ENCODE measurements at regions of chr19 and their contacts with region 1.

Region 1: GRCh38 chr19:54882758-54883157 is 8.7 kb downstream of the FCAR start:
- DNase-seq: no peak
- ATAC-seq: peak; percentile 40
- H3K4me3 ChIP-seq: no peak overlapping the region
- H3K4me3 Mint-ChIP-seq: peak overlapping the region in 2 of 10 donors; percentile 36 to 68
- H3K27ac ChIP-seq: no peak overlapping the region
- H3K27ac Mint-ChIP-seq: peak overlapping the region in 2 of 9 donors; percentile 51 to 82
- H3K4me1 ChIP-seq: no peaks in the 10 kb centered on the region
- H3K4me1 Mint-ChIP-seq: peaks cover 0 to 11% (median 0%) of the 10 kb centered on the region in 7 donors
- H3K27me3 ChIP-seq: no peaks in the 10 kb centered on the region
- H3K27me3 Mint-ChIP-seq: peaks cover 12 to 51% (median 35%) of the 10 kb centered on the region in 5 donors

Region 2: GRCh38 chr19:55062734-55063492 is 180.2 kb after region 1 on chr19 and contains the start of gene RDH13:
- CTCF ChIA-PET with region 1: no interaction called
- POLR2A ChIA-PET with region 1: no interaction called
- intact Hi-C with region 1: loop called in 1 of 2 experiments (anchors 5 kb)
- DNase-seq: peak; percentile 95 to 99 (median 97)
- ATAC-seq: peak; percentile 100
- H3K4me3 ChIP-seq: peak within 1 kb of the TSS; percentile 74
- H3K4me3 Mint-ChIP-seq: peak within 1 kb of the TSS; percentile 65 to 94 (median 86)
- H3K27ac ChIP-seq: peak within 1 kb of the TSS; percentile 78
- H3K27ac Mint-ChIP-seq: peak within 1 kb of the TSS; percentile 31 to 88 (median 77)
- H3K4me1 ChIP-seq: peaks cover 7 to 10% of the 10 kb centered on the region in 2 donors
- H3K4me1 Mint-ChIP-seq: peaks cover 0 to 33% (median 18%) of the 10 kb centered on the region in 7 donors
- H3K27me3 ChIP-seq: peaks cover 0 to 9% of the 10 kb centered on the region in 2 donors
- H3K27me3 Mint-ChIP-seq: peaks cover 19 to 36% (median 22%) of the 10 kb centered on the region in 5 donors
- total RNA-seq, gene RDH13: 14.5 to 24.8 (median 19.0) TPM

Region 3: GRCh38 chr19:55132453-55133129 is 249.8 kb after region 1 on chr19:
- CTCF ChIA-PET with region 1: no interaction called
- POLR2A ChIA-PET with region 1: no interaction called
- intact Hi-C with region 1: loop called in 1 of 2 experiments (anchors 5 kb)
- DNase-seq: no peak
- ATAC-seq: no peak
- H3K4me3 ChIP-seq: no peak overlapping the region
- H3K4me3 Mint-ChIP-seq: no peak overlapping the region
- H3K27ac ChIP-seq: no peak overlapping the region
- H3K27ac Mint-ChIP-seq: no peak overlapping the region
- H3K4me1 ChIP-seq: no peaks in the 10 kb centered on the region
- H3K4me1 Mint-ChIP-seq: no peaks in the 10 kb centered on the region
- H3K27me3 ChIP-seq: peaks cover 0 to 3% of the 10 kb centered on the region in 2 donors
- H3K27me3 Mint-ChIP-seq: peaks cover 35 to 45% (median 38%) of the 10 kb centered on the region in 5 donors

Region 4: GRCh38 chr19:55166530-55167268 is 283.9 kb after region 1 on chr19 and contains the start of gene DNAAF3:
- CTCF ChIA-PET with region 1: no interaction called
- POLR2A ChIA-PET with region 1: no interaction called
- intact Hi-C with region 1: no loop called
- DNase-seq: peak in 8 of 9 donors; percentile 37 to 82 (median 60)
- ATAC-seq: peak; percentile 92
- H3K4me3 ChIP-seq: no peak within 1 kb of the TSS
- H3K4me3 Mint-ChIP-seq: peak within 1 kb of the TSS; percentile 41 to 89 (median 70)
- H3K27ac ChIP-seq: no peak within 1 kb of the TSS
- H3K27ac Mint-ChIP-seq: peak within 1 kb of the TSS in 6 of 9 donors; percentile 32 to 88 (median 70)
- H3K4me1 ChIP-seq: peaks cover 0 to 7% of the 10 kb centered on the region in 2 donors
- H3K4me1 Mint-ChIP-seq: peaks cover 10 to 17% (median 13%) of the 10 kb centered on the region in 7 donors
- H3K27me3 ChIP-seq: peaks cover 4 to 26% of the 10 kb centered on the region in 2 donors
- H3K27me3 Mint-ChIP-seq: peaks cover 61 to 70% (median 66%) of the 10 kb centered on the region in 5 donors
- total RNA-seq, gene DNAAF3: not detected

Region 5: GRCh38 chr19:55301459-55302317 is 418.9 kb after region 1 on chr19:
- CTCF ChIA-PET with region 1: no interaction called
- POLR2A ChIA-PET with region 1: no interaction called
- intact Hi-C with region 1: loop called in 1 of 2 experiments (anchors 5 kb)
- DNase-seq: peak; percentile 84 to 97 (median 91)
- ATAC-seq: peak; percentile 97
- H3K4me3 ChIP-seq: peak overlapping the region; percentile 61
- H3K4me3 Mint-ChIP-seq: peak overlapping the region; percentile 77 to 97 (median 88)
- H3K27ac ChIP-seq: peak overlapping the region; percentile 66
- H3K27ac Mint-ChIP-seq: peak overlapping the region; percentile 66 to 95 (median 84)
- H3K4me1 ChIP-seq: peaks cover 5 to 10% of the 10 kb centered on the region in 2 donors
- H3K4me1 Mint-ChIP-seq: peaks cover 0 to 17% (median 11%) of the 10 kb centered on the region in 7 donors
- H3K27me3 ChIP-seq: no peaks in the 10 kb centered on the region
- H3K27me3 Mint-ChIP-seq: peaks cover 0 to 3% (median 0%) of the 10 kb centered on the region in 5 donors

Measured in naive thymus-derived CD4-positive, alpha-beta T cell (primary cell).